ENCODE measurements at regions of chr13 and their contacts with region 1.

Region 1: DNA sequence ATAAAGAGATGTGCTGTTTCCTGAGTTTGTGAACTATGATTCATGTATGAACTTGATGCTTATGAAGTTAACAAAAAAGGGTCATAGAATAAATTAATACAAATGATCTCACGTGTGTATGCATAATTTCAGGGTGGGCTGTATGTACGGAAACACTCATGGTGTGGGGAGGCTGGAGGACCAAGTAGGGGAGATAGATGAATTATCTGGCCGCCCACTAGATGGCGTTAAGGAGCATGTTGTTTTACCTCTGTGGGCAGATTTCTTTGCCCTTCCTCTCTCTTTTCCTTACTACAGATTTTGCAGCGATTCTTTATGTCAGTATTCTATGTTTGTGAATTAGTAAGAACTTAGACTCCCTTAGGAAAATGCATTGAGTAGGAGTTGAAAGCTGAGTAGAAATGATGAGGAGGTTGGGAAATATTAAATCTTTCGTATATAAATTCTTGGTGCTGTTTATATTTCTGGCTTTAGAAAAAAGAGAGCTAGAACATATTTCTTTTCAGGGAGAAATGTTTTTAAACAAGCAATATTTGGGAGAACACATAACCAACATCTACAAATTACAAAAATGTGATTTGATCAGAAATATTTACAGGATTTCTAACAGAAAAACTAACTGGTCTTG is 47.4 kb upstream of the TMTC4 start:
- DNase-seq: peak; percentile 68
- H3K4me3 ChIP-seq: no peak overlapping the region
- H3K27ac ChIP-seq: no peak overlapping the region
- H3K4me1 ChIP-seq: no peaks in the 10 kb centered on the region
- H3K27me3 ChIP-seq: no peaks in the 10 kb centered on the region
- CTCF ChIP-seq: peak; percentile 81

Region 2: GRCh38 chr13:100987953-100988352 is 266.0 kb after region 1 on chr13:
- CTCF ChIA-PET with region 1: no interaction called
- POLR2A ChIA-PET with region 1: no interaction called
- intact Hi-C with region 1: loop called (anchors 2 kb)
- DNase-seq: peak; percentile 42
- H3K4me3 ChIP-seq: no peak overlapping the region
- H3K27ac ChIP-seq: no peak overlapping the region
- H3K4me1 ChIP-seq: peaks cover 20% of the 10 kb centered on the region
- H3K27me3 ChIP-seq: no peaks in the 10 kb centered on the region
- CTCF ChIP-seq: peak; percentile 54

Region 3: GRCh38 chr13:101098873-101099272 is 376.9 kb after region 1 on chr13:
- CTCF ChIA-PET with region 1: no interaction called
- POLR2A ChIA-PET with region 1: no interaction called
- intact Hi-C with region 1: loop called (anchors 5 kb)
- DNase-seq: peak; percentile 18
- H3K4me3 ChIP-seq: no peak overlapping the region
- H3K27ac ChIP-seq: no peak overlapping the region
- H3K4me1 ChIP-seq: no peaks in the 10 kb centered on the region
- H3K27me3 ChIP-seq: no peaks in the 10 kb centered on the region
- CTCF ChIP-seq: no peak

Region 4: GRCh38 chr13:101127741-101128353 is 405.8 kb after region 1 on chr13:
- CTCF ChIA-PET with region 1: no interaction called
- POLR2A ChIA-PET with region 1: no interaction called
- intact Hi-C with region 1: loop called (anchors 5 kb)
- DNase-seq: peak; percentile 71
- H3K4me3 ChIP-seq: no peak overlapping the region
- H3K27ac ChIP-seq: no peak overlapping the region
- H3K4me1 ChIP-seq: no peaks in the 10 kb centered on the region
- H3K27me3 ChIP-seq: peaks cover 8% of the 10 kb centered on the region
- CTCF ChIP-seq: peak; percentile 86